Activated CD4-positive, alpha-beta memory T cell treated with anti-CD3 and anti-CD28 coated beads for 36 hours (primary cell): ENCODE measurements at regions of chr7 and their contacts with region 1.

Region 1: DNA sequence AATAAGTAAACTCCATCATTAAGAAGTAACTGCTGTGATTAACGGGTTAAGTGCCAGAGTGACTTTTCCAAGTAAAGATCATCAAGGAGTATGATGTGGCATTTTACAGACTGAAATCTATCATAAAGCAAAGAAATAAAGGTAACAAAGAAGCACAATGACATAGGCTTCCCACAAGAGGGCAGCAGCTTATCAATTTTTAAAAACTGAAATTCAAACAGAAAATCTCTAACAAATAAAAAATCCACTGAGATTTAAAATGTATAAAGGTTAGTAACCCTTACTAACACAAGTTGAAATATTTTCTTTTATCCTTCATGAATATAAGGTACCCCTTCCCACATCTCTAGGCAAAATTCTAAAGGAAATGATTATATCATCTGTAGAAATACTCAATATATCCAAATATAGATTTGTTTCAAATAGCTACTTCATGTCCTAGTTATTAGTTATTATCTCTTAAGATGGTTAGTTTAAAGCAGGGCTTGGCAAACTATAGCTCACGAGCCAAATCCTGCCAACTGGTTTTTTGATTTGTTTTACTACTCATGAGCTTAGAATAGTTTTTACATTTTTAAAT is 29.2 kb downstream of the FAM3C start:
- DNase-seq: no peak
- H3K4me3 Mint-ChIP-seq: no peak overlapping the region
- H3K27ac Mint-ChIP-seq: no peak overlapping the region
- H3K4me1 Mint-ChIP-seq: peaks cover 8% of the 10 kb centered on the region
- H3K27me3 Mint-ChIP-seq: no peaks in the 10 kb centered on the region

Region 2: GRCh38 chr7:121385800-121386179 is 18.8 kb after region 1 on chr7:
- CTCF ChIA-PET with region 1: interaction called, 16 read pairs
- POLR2A ChIA-PET with region 1: no interaction called
- intact Hi-C with region 1: no loop called
- DNase-seq: no peak
- H3K4me3 Mint-ChIP-seq: no peak overlapping the region
- H3K27ac Mint-ChIP-seq: no peak overlapping the region
- H3K4me1 Mint-ChIP-seq: peaks cover 59% of the 10 kb centered on the region
- H3K27me3 Mint-ChIP-seq: no peaks in the 10 kb centered on the region

Region 3: GRCh38 chr7:121437456-121438127 is 70.7 kb after region 1 on chr7:
- CTCF ChIA-PET with region 1: interaction called, 3 read pairs
- POLR2A ChIA-PET with region 1: no interaction called
- intact Hi-C with region 1: loop called (anchors 1 kb)
- DNase-seq: no peak
- H3K4me3 Mint-ChIP-seq: no peak overlapping the region
- H3K27ac Mint-ChIP-seq: peak overlapping the region; percentile 74
- H3K4me1 Mint-ChIP-seq: peaks cover 30% of the 10 kb centered on the region
- H3K27me3 Mint-ChIP-seq: no peaks in the 10 kb centered on the region

Region 4: GRCh38 chr7:121500360-121501058 is 133.6 kb after region 1 on chr7:
- CTCF ChIA-PET with region 1: interaction called, 6 read pairs
- POLR2A ChIA-PET with region 1: no interaction called
- intact Hi-C with region 1: loop called (anchors 5 kb)
- DNase-seq: peak; percentile 33
- H3K4me3 Mint-ChIP-seq: no peak overlapping the region
- H3K27ac Mint-ChIP-seq: peak overlapping the region; percentile 32
- H3K4me1 Mint-ChIP-seq: peaks cover 17% of the 10 kb centered on the region
- H3K27me3 Mint-ChIP-seq: no peaks in the 10 kb centered on the region

Region 5: DNA sequence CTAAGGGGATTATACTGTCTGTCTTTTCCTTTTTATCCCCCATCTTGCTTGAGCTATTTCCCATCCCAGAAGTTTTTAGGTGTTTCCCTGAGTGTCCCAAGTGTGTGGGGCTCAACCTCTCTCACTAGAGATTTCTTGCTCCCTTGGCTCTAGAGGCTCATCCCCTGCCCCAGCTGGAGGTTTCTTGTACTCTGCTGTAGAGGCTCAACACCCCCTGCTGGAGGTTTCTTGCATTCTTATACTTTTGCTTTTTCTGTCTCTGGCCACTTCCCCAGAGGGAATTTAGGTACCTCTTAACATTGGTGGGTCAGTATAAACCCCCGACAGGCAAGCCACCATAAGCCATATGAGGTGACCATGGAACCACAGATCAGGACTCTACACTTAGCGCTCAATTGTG is 143.4 kb after region 1 on chr7:
- CTCF ChIA-PET with region 1: interaction called, 13 read pairs
- POLR2A ChIA-PET with region 1: no interaction called
- intact Hi-C with region 1: no loop called
- DNase-seq: no peak
- H3K4me3 Mint-ChIP-seq: no peak overlapping the region
- H3K27ac Mint-ChIP-seq: no peak overlapping the region
- H3K4me1 Mint-ChIP-seq: no peaks in the 10 kb centered on the region
- H3K27me3 Mint-ChIP-seq: peaks cover 12% of the 10 kb centered on the region

Region 6: GRCh38 chr7:121530227-121531174 is 163.6 kb after region 1 on chr7:
- CTCF ChIA-PET with region 1: interaction called, 14 read pairs
- POLR2A ChIA-PET with region 1: no interaction called
- intact Hi-C with region 1: no loop called
- DNase-seq: peak; percentile 74
- H3K4me3 Mint-ChIP-seq: peak overlapping the region; percentile 21
- H3K27ac Mint-ChIP-seq: peak overlapping the region; percentile 87
- H3K4me1 Mint-ChIP-seq: peaks cover 21% of the 10 kb centered on the region
- H3K27me3 Mint-ChIP-seq: no peaks in the 10 kb centered on the region

Region 7: DNA sequence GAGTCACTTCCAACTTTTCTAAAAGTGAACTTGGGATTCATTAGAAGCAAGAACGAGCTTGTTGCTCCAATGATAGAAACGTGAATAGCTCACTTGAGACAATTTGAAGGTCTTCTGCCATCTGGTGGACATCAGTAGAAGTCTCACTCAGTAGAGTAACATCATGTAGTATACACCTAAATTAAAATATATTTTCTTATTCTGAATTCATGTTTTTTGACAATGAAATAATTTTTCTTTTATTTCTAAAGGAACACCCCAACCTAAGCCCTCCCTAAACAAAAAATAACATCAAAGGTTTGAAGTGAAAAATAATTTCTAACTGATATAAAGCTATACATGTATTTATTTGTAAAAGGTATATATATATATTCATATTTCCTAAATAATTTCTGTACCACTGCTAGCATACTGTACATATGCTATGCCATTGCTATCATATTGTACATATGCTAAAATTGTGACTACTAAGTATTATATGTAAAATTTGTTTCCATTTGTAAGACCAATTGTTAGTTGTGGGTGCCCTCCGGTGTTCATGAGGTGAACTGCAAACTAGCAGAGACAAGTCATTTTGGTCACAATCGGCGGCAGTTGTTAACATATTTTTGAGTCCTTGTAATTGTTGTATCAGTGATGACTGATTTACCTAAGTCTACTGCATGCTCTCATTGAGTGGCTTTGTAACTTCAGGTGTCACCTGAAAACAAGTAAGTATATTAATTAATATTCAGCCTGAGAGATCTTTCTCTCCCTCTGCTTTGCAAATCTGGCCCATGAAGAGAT is 627.9 kb after region 1 on chr7:
- CTCF ChIA-PET with region 1: interaction called, 17 read pairs
- POLR2A ChIA-PET with region 1: no interaction called
- intact Hi-C with region 1: loop called (anchors 2 kb)
- DNase-seq: peak; percentile 54
- H3K4me3 Mint-ChIP-seq: no peak overlapping the region
- H3K27ac Mint-ChIP-seq: no peak overlapping the region
- H3K4me1 Mint-ChIP-seq: no peaks in the 10 kb centered on the region
- H3K27me3 Mint-ChIP-seq: no peaks in the 10 kb centered on the region